ENCODE measurements at regions of chr15 and their contacts with region 1.

Region 1: DNA sequence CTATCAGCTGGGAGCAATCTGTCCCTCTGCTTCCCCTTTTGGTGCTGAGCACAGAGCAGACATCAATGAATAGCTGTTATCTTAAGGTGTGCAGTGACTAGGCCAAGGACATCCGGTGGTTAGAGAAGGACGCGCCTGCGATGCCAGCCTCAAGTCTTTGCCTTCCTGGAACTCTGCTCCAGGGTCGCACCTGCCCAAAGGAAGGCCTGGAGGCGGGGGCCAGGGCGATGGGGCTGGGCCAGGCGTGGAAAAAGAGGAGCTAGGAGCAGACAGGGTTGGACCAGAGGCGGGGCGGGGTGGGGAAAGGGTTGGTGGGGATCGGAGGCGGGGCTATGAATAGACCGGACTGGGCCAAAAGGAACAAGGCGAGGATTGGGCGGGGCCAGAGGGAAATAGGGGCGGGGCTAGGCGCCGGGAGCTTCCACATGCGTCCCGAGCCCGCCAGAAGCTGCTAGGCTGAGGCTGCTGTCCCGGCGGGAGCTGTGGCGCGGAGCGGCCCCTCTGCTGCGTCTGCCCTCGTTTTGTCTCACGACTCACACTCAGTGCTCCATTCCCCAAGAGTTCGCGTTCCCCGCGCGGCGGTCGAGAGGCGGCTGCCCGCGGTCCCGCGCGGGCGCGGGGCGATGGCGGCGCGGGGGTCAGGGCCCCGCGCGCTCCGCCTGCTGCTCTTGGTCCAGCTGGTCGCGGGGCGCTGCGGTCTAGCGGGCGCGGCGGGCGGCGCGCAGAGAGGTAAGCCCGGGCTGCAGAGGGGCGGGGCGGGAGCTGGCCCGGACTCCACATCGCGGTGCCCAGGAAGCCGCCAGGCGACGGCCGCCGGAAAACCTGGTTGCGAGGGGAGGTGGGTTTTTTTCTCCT is at the start of gene CHRNA5:
- DNase-seq: peak; percentile 84 to 97
- H3K4me3 ChIP-seq: peak within 1 kb of the TSS; percentile 68
- H3K27ac ChIP-seq: peak within 1 kb of the TSS; percentile 44
- H3K4me1 ChIP-seq: peaks cover 14% of the 10 kb centered on the region
- H3K27me3 ChIP-seq: no peaks in the 10 kb centered on the region
- CTCF ChIP-seq: no peak
- total RNA-seq, gene CHRNA5: 9.5 and 10.7 TPM in 2 replicates

Region 2: GRCh38 chr15:77831986-77832385 is 733.3 kb before region 1 on chr15:
- CTCF ChIA-PET with region 1: interaction called, 11 read pairs
- POLR2A ChIA-PET with region 1: no interaction called
- intact Hi-C with region 1: no loop called
- DNase-seq: no peak
- H3K4me3 ChIP-seq: no peak overlapping the region
- H3K27ac ChIP-seq: no peak overlapping the region
- H3K4me1 ChIP-seq: no peaks in the 10 kb centered on the region
- H3K27me3 ChIP-seq: peaks cover 20% of the 10 kb centered on the region
- CTCF ChIP-seq: no peak

Region 3: DNA sequence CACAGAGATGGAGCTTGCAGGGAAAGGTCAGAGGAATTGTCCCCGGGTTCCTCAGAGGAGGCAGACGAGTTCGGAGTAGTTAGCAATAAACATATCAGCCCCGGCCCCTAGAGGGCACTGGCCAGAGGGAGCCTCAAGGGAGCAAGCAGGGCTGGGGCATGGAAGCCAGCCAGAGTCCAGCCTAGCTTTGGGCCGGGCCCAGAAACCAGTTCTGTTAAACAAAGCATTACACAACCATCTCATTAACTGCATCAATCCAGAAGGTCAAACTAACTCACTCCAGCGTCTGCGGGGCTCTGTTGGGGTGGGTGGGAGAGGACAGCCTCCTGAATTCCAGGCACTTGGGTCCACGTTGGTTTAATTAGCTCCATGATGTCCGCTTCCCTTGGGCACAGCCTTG is 168.3 kb before region 1 on chr15:
- CTCF ChIA-PET with region 1: interaction called, 19 read pairs
- POLR2A ChIA-PET with region 1: no interaction called
- intact Hi-C with region 1: no loop called
- DNase-seq: no peak
- H3K4me3 ChIP-seq: no peak overlapping the region
- H3K27ac ChIP-seq: no peak overlapping the region
- H3K4me1 ChIP-seq: no peaks in the 10 kb centered on the region
- H3K27me3 ChIP-seq: 0 out of 2 replicates have a peak, but pooled peaks cover 4% of the 10 kb centered on the region
- CTCF ChIP-seq: peak; percentile 46

Region 4: GRCh38 chr15:78422571-78423340 is 142.6 kb before region 1 on chr15:
- CTCF ChIA-PET with region 1: no interaction called
- POLR2A ChIA-PET with region 1: interaction called, 13 read pairs
- intact Hi-C with region 1: no loop called
- DNase-seq: peak; percentile 41 to 43
- H3K4me3 ChIP-seq: no peak overlapping the region
- H3K27ac ChIP-seq: no peak overlapping the region
- H3K4me1 ChIP-seq: no peaks in the 10 kb centered on the region
- H3K27me3 ChIP-seq: no peaks in the 10 kb centered on the region
- CTCF ChIP-seq: peak; percentile 90

Region 5: GRCh38 chr15:78540141-78540928 is 25.0 kb before region 1 on chr15 and contains the start of gene PSMA4:
- CTCF ChIA-PET with region 1: no interaction called
- POLR2A ChIA-PET with region 1: interaction called, 7 read pairs
- intact Hi-C with region 1: loop called (anchors 2 kb)
- DNase-seq: peak; percentile 51 to 86
- H3K4me3 ChIP-seq: peak within 1 kb of the TSS; percentile 93
- H3K27ac ChIP-seq: peak within 1 kb of the TSS; percentile 73
- H3K4me1 ChIP-seq: peaks cover 15% of the 10 kb centered on the region
- H3K27me3 ChIP-seq: no peaks in the 10 kb centered on the region
- CTCF ChIP-seq: no peak
- total RNA-seq, gene PSMA4: 142 and 230 TPM in 2 replicates

Region 6: GRCh38 chr15:78714890-78715289 is 149.6 kb after region 1 on chr15:
- CTCF ChIA-PET with region 1: no interaction called
- POLR2A ChIA-PET with region 1: no interaction called
- intact Hi-C with region 1: no loop called
- DNase-seq: peak in 1 of 2 experiments; percentile 40
- H3K4me3 ChIP-seq: no peak overlapping the region
- H3K27ac ChIP-seq: no peak overlapping the region
- H3K4me1 ChIP-seq: no peaks in the 10 kb centered on the region
- H3K27me3 ChIP-seq: no peaks in the 10 kb centered on the region
- CTCF ChIP-seq: no peak

Region 7: DNA sequence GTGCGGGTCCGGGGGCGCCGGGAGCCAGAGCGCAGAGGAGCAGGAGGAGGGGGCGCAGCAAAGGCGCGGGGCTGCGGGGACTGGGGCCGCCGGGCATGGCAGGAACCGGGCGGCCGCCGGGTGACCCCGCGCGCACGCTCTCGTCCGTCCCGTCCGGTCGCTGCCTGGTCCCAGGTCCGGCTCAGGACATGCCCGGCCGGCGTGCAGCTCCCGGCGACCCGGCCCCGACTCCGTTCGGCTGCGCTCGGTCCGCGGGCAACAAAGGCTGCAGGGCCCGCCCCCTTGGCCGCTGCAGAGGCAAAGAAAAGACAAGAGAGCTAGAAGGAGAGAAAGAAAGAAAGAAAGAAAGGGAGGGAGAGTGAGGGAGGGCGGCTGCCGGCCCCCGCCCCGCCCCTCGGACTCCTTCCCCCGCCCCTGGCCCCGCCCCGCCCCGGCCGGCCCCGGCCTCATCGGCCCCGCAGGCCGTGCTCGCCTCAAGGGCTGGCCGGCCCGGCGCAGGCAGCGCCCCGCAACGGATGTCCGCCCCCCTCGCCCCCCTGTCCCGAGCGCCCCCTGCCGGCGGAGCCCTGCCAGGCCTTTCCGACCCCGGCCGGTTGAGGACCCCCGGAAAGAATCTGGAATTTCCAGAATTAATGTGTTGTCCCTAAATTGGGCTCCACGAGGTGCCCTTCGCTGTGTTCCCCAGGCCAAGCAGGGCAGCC is 245.9 kb after region 1 on chr15 and contains the start of gene ADAMTS7:
- CTCF ChIA-PET with region 1: no interaction called
- POLR2A ChIA-PET with region 1: no interaction called
- intact Hi-C with region 1: no loop called
- DNase-seq: peak in 1 of 2 experiments; percentile 64
- H3K4me3 ChIP-seq: peak within 1 kb of the TSS; percentile 48
- H3K27ac ChIP-seq: no peak within 1 kb of the TSS
- H3K4me1 ChIP-seq: peaks cover 5% of the 10 kb centered on the region; the same call in 1 of the 2 replicates
- H3K27me3 ChIP-seq: peaks cover 31% of the 10 kb centered on the region
- CTCF ChIP-seq: peak; percentile 70
- total RNA-seq, gene ADAMTS7: 1.3 and 1.9 TPM in 2 replicates

Measured in PC-9 (cell line).